ENCODE measurements at regions of chr22 and their contacts with region 1.

Region 1: GRCh38 chr22:40436505-40437451 is 66.4 kb downstream of the SGSM3 start:
- DNase-seq: peak; percentile 88
- ATAC-seq: peak; percentile 87
- H3K4me3 ChIP-seq: peak overlapping the region; percentile 50
- H3K27ac ChIP-seq: peak overlapping the region; percentile 84
- H3K4me1 ChIP-seq: peaks cover 72% of the 10 kb centered on the region
- H3K27me3 ChIP-seq: no peaks in the 10 kb centered on the region
- CTCF ChIP-seq: peak; percentile 45 to 52 (median 49); a peak in 5 of 6 replicates
- EP300 ChIP-seq: peak in 1 of 2 experiments; percentile 51; a peak in 3 of 4 replicates
- POLR2A ChIP-seq: no peak
- RAD21 ChIP-seq: peak; percentile 61

Region 2: DNA sequence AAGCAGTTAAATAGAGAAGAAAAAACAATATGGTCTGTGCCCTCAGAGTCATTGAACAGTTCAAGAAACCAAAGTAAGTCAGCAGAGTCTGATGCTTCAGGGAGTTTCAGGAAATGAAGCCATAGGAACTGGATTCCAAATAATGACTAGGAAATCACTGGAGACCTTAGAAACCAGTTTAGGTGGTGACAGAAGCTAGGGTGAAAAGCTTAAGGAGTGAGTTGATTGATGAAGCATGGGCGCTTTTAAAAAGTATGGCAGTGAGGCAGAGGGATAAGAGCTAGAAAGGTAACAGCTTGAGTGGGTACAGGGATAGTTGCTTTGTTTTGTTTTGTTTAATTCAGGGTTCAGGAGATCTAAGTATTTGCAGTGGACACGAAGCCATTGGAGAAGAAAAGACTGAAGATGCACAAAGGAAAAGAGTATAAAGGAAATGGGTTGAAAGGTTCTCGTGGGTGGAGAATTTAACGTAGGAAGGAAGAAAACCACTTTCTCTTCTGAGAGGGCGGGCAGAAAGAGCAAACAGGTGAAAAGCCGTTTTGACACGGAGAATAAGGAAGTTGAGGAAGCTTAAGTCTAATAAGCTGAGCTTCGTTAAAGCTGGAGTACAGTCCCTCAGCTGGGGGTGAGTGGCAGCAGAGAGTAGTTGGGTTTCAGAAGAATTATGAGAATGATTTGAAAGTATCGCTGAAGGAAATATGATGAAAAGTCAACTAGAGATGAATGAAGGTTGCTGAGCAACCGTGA is 51.6 kb before region 1 on chr22:
- CTCF ChIA-PET with region 1: interaction called, 10 read pairs
- POLR2A ChIA-PET with region 1: interaction called, 10 read pairs
- RAD21 ChIA-PET with region 1: interaction called, 7 read pairs
- SMC1A ChIA-PET with region 1: interaction called, 17 read pairs
- in situ Hi-C with region 1: no loop called
- intact Hi-C with region 1: no loop called
- DNase-seq: no peak
- ATAC-seq: peak; percentile 92
- H3K4me3 ChIP-seq: peak overlapping the region; percentile 54
- H3K27ac ChIP-seq: peak overlapping the region; percentile 91
- H3K4me1 ChIP-seq: peaks cover 26% of the 10 kb centered on the region
- H3K27me3 ChIP-seq: no peaks in the 10 kb centered on the region
- CTCF ChIP-seq: 0 out of 6 replicates have a peak, but pooled peaks of 1 of the 3 experiments have one; percentile 4
- EP300 ChIP-seq: no peak; a peak in 1 of 4 replicates
- POLR2A ChIP-seq: no peak
- RAD21 ChIP-seq: no peak

Region 3: DNA sequence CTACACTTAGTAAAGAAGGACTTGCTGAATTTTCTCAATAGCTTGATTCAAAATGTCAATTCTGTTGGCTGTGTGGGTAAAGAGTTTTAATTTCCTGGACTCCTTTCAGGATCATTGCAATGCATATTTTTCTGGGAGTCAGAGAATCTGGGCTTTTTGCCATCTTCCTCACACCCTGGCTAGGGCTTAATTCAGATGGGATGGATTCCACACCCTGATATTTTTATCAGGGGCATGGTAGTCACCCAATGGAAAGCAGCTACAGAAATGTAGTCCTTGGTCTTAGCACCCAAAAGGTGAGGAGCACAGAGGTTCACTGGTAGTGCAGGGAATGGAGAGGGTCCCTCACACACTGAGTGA is 12.9 kb after region 1 on chr22:
- CTCF ChIA-PET with region 1: interaction called, 14 read pairs
- POLR2A ChIA-PET with region 1: interaction called, 5 read pairs
- RAD21 ChIA-PET with region 1: interaction called, 3 read pairs
- SMC1A ChIA-PET with region 1: interaction called, 4 read pairs
- in situ Hi-C with region 1: no loop called
- intact Hi-C with region 1: no loop called
- DNase-seq: no peak
- ATAC-seq: no peak
- H3K4me3 ChIP-seq: no peak overlapping the region
- H3K27ac ChIP-seq: no peak overlapping the region
- H3K4me1 ChIP-seq: peaks cover 3% of the 10 kb centered on the region; the same call in 1 of the 2 replicates
- H3K27me3 ChIP-seq: no peaks in the 10 kb centered on the region
- CTCF ChIP-seq: no peak
- EP300 ChIP-seq: no peak
- POLR2A ChIP-seq: no peak
- RAD21 ChIP-seq: no peak

Region 4: DNA sequence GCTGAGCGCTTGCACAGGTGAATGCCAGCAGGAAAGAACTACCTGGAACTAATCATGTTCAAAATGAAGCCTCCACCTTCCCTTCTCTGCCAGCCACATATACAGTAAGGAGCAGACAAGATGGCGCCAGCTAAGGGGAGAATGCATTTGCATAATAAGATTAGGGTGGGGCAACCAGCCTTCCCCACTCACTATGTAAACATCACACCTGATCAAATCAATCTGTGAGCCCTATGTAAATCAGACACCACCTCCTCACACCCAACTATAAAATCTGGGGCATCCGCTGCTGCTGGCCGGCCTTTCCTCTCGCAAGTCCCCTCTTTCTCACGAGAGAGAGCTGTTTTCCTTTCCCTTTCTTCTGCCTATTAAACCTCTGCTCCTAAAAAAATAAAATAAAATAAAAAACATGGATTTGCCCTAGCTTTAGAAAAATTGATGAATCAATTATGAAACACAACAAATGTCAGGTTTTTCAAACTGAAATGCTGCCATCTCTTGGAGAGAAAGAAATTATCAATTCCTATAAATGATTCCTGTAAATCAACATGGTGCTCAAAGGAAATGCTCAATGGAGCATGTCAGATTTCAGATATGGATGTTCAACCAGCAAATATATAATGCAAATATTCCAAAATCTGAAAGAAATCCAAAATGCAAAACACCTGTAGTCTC is 42.5 kb after region 1 on chr22:
- CTCF ChIA-PET with region 1: interaction called, 202 read pairs
- POLR2A ChIA-PET with region 1: interaction called, 11 read pairs
- RAD21 ChIA-PET with region 1: interaction called, 8 read pairs
- SMC1A ChIA-PET with region 1: interaction called, 25 read pairs
- in situ Hi-C with region 1: no loop called
- intact Hi-C with region 1: no loop called
- DNase-seq: no peak
- ATAC-seq: no peak
- H3K4me3 ChIP-seq: no peak overlapping the region
- H3K27ac ChIP-seq: no peak overlapping the region
- H3K4me1 ChIP-seq: peaks cover 10% of the 10 kb centered on the region
- H3K27me3 ChIP-seq: no peaks in the 10 kb centered on the region
- CTCF ChIP-seq: no peak
- EP300 ChIP-seq: no peak
- POLR2A ChIP-seq: no peak
- RAD21 ChIP-seq: no peak

Region 5: DNA sequence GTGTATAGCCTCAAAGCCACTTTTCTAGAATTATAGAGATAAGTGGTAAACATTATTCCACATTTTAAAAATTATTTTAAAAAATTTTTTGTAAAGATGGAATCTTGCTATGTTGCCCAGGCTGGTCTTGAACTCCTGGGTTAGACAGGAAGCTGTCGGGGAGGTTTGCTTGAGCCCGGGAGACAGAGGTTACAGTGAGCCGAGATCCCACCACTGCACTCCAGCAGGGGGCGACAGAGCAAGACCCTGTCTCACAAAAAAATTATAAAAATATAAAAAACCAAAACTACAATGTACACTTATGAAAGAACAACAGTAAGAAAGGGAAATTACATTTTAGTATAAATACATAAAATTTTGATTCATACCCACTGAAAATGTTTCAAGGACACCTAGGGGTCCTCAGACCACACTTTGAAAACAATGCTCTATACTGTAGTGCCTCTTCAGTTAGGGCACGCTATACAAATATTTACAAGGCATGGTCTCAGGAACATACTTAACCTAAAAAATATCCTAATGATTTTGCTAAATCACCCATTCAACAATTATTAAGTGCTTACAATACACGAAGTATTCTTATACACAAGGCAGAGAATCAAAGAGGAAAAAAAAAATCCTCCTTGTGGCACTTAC is 88.6 kb after region 1 on chr22:
- CTCF ChIA-PET with region 1: interaction called, 63 read pairs
- POLR2A ChIA-PET with region 1: interaction called, 8 read pairs
- RAD21 ChIA-PET with region 1: interaction called, 70 read pairs
- SMC1A ChIA-PET with region 1: interaction called, 99 read pairs
- in situ Hi-C with region 1: no loop called
- intact Hi-C with region 1: no loop called
- DNase-seq: no peak
- ATAC-seq: peak; percentile 78
- H3K4me3 ChIP-seq: no peak overlapping the region
- H3K27ac ChIP-seq: no peak overlapping the region; the same call in 1 of the 2 replicates
- H3K4me1 ChIP-seq: peaks cover 15% of the 10 kb centered on the region
- H3K27me3 ChIP-seq: no peaks in the 10 kb centered on the region
- CTCF ChIP-seq: peak; percentile 51 to 68 (median 62)
- EP300 ChIP-seq: no peak
- POLR2A ChIP-seq: no peak
- RAD21 ChIP-seq: peak; percentile 68

Region 6: GRCh38 chr22:40557972-40558371 is 121.2 kb after region 1 on chr22:
- CTCF ChIA-PET with region 1: no interaction called
- POLR2A ChIA-PET with region 1: no interaction called
- RAD21 ChIA-PET with region 1: no interaction called
- SMC1A ChIA-PET with region 1: no interaction called
- in situ Hi-C with region 1: no loop called
- intact Hi-C with region 1: no loop called
- DNase-seq: no peak
- ATAC-seq: no peak
- H3K4me3 ChIP-seq: no peak overlapping the region
- H3K27ac ChIP-seq: no peak overlapping the region
- H3K4me1 ChIP-seq: no peaks in the 10 kb centered on the region
- H3K27me3 ChIP-seq: no peaks in the 10 kb centered on the region
- CTCF ChIP-seq: no peak
- EP300 ChIP-seq: no peak
- POLR2A ChIP-seq: no peak
- RAD21 ChIP-seq: no peak

Region 7: DNA sequence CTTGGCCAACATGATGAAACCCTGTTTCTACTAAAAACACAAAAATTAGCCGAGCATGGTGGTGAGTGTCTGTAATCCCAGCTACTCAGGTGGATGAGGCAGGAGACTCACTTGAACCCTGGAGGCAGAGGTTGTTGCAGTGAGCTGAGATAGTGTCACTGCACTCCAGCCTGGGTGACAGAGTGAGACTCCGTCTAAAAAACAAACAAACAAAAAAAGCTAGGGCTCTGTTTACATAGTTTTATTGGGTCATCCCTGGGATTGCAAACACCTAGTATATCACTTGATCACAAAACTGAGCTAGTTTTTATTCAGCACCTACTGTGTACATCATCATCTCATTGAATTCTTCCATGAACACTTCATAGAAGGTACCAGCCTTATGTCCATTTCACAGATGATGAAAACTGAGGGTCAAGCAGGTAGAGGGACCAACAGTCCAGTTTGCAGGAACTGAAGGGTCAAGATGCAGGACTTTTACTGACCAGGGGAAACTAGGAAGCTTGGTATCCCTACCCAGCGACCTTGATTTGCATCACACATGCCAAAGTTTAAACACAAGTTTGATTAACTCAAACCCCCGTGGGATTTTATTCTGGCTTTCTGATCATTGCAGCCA is 208.9 kb after region 1 on chr22:
- CTCF ChIA-PET with region 1: interaction called, 152 read pairs
- POLR2A ChIA-PET with region 1: interaction called, 9 read pairs
- RAD21 ChIA-PET with region 1: interaction called, 121 read pairs
- SMC1A ChIA-PET with region 1: interaction called, 141 read pairs
- in situ Hi-C with region 1: loop called (anchors 5 kb)
- intact Hi-C with region 1: loop called (anchors 1 kb)
- DNase-seq: no peak
- ATAC-seq: no peak
- H3K4me3 ChIP-seq: no peak overlapping the region
- H3K27ac ChIP-seq: no peak overlapping the region
- H3K4me1 ChIP-seq: peaks cover 18% of the 10 kb centered on the region
- H3K27me3 ChIP-seq: no peaks in the 10 kb centered on the region
- CTCF ChIP-seq: no peak
- EP300 ChIP-seq: no peak
- POLR2A ChIP-seq: no peak
- RAD21 ChIP-seq: no peak